SK-N-SH (cell line): ENCODE measurements at regions of chr12 and their contacts with region 1.

Region 1: GRCh38 chr12:31274520-31275300 is 51.2 kb downstream of the SINHCAF start:
- DNase-seq: no peak
- H3K4me3 ChIP-seq: no peak overlapping the region
- H3K27ac ChIP-seq: no peak overlapping the region
- H3K4me1 ChIP-seq: no peaks in the 10 kb centered on the region
- H3K27me3 ChIP-seq: no peaks in the 10 kb centered on the region
- CTCF ChIP-seq: no peak
- EP300 ChIP-seq: no peak
- RAD21 ChIP-seq: no peak

Region 2: DNA sequence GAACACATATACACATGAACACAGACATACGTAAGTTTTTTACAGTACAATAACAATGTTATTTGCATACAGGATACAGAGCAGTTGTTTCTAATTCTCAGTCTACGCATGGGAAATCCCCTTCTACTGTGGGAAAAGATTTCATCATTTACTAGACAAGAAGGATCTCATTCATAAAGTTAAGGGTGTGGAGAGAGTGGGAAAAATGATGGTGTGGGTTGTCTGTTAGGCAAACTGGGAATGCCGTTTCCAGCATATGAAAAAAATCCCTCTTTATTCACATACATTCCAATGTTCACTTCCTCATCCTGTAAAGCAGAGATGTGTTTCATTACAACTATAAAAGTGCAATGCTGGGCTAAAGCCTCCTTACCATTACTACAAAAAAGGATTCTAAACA is 69.7 kb before region 1 on chr12:
- CTCF ChIA-PET with region 1: no interaction called
- POLR2A ChIA-PET with region 1: no interaction called
- DNase-seq: no peak
- H3K4me3 ChIP-seq: no peak overlapping the region
- H3K27ac ChIP-seq: no peak overlapping the region
- H3K4me1 ChIP-seq: 0 out of 4 replicates have a peak, but pooled peaks cover 0 to 4% of the 10 kb centered on the region in 2 experiments
- H3K27me3 ChIP-seq: no peaks in the 10 kb centered on the region
- CTCF ChIP-seq: no peak
- EP300 ChIP-seq: no peak
- RAD21 ChIP-seq: no peak

Region 3: GRCh38 chr12:31245822-31246469 is 28.8 kb before region 1 on chr12:
- CTCF ChIA-PET with region 1: interaction called, 46 read pairs
- POLR2A ChIA-PET with region 1: no interaction called
- DNase-seq: no peak
- H3K4me3 ChIP-seq: no peak overlapping the region
- H3K27ac ChIP-seq: no peak overlapping the region
- H3K4me1 ChIP-seq: no peaks in the 10 kb centered on the region
- H3K27me3 ChIP-seq: no peaks in the 10 kb centered on the region
- CTCF ChIP-seq: no peak
- EP300 ChIP-seq: no peak
- RAD21 ChIP-seq: no peak

Region 4: GRCh38 chr12:31289441-31289840 is 14.7 kb after region 1 on chr12:
- CTCF ChIA-PET with region 1: interaction called, 41 read pairs
- POLR2A ChIA-PET with region 1: interaction called, 3 read pairs
- DNase-seq: no peak
- H3K4me3 ChIP-seq: no peak overlapping the region
- H3K27ac ChIP-seq: no peak overlapping the region
- H3K4me1 ChIP-seq: no peaks in the 10 kb centered on the region; a peak in 1 of 4 replicates
- H3K27me3 ChIP-seq: no peaks in the 10 kb centered on the region
- CTCF ChIP-seq: no peak
- EP300 ChIP-seq: no peak
- RAD21 ChIP-seq: no peak

Region 5: GRCh38 chr12:31297572-31298512 is 23.1 kb after region 1 on chr12:
- CTCF ChIA-PET with region 1: interaction called, 41 read pairs
- POLR2A ChIA-PET with region 1: no interaction called
- DNase-seq: no peak
- H3K4me3 ChIP-seq: no peak overlapping the region
- H3K27ac ChIP-seq: no peak overlapping the region; a peak in 1 of 4 replicates
- H3K4me1 ChIP-seq: peaks cover 0 to 5% of the 10 kb centered on the region in 2 experiments; a peak in 2 of 4 replicates
- H3K27me3 ChIP-seq: no peaks in the 10 kb centered on the region
- CTCF ChIP-seq: no peak
- EP300 ChIP-seq: no peak
- RAD21 ChIP-seq: no peak

Region 6: DNA sequence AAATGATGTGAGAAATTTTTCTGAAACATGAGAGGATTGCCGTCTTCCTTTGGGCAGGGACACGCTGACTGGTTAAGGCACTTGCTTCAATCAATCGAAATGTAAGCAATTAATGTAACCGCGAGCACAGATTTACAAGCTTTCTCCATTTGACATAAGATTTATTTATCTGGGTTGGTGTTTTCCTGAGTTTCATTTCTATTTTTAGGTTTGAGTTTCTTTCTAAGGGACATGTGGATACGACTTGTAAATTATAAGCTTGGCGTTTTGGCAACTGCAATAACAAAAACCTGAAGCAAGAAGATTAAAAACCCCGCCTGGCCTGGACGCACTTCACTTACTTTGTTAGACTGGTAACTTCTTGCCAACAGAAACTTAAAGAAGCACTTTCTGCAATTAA is 71.6 kb after region 1 on chr12:
- CTCF ChIA-PET with region 1: interaction called, 14 read pairs
- POLR2A ChIA-PET with region 1: no interaction called
- DNase-seq: no peak
- H3K4me3 ChIP-seq: no peak overlapping the region
- H3K27ac ChIP-seq: no peak overlapping the region
- H3K4me1 ChIP-seq: no peaks in the 10 kb centered on the region
- H3K27me3 ChIP-seq: no peaks in the 10 kb centered on the region
- CTCF ChIP-seq: no peak
- EP300 ChIP-seq: no peak
- RAD21 ChIP-seq: no peak

Region 7: GRCh38 chr12:31491819-31492598 is 217.3 kb after region 1 on chr12:
- CTCF ChIA-PET with region 1: no interaction called
- POLR2A ChIA-PET with region 1: no interaction called
- DNase-seq: no peak
- H3K4me3 ChIP-seq: no peak overlapping the region; a peak in 1 of 4 replicates
- H3K27ac ChIP-seq: peak overlapping the region; percentile 82 to 89; a peak in 3 of 4 replicates
- H3K4me1 ChIP-seq: peaks cover 8 to 34% of the 10 kb centered on the region in 2 experiments; a peak in 3 of 4 replicates
- H3K27me3 ChIP-seq: no peaks in the 10 kb centered on the region
- CTCF ChIP-seq: no peak
- EP300 ChIP-seq: peak; percentile 29 to 71; a peak in 2 of 4 replicates
- RAD21 ChIP-seq: no peak